Vagina (tissue), 2 donors: ENCODE measurements at regions of chr5 and their contacts with region 1.

Region 1: DNA sequence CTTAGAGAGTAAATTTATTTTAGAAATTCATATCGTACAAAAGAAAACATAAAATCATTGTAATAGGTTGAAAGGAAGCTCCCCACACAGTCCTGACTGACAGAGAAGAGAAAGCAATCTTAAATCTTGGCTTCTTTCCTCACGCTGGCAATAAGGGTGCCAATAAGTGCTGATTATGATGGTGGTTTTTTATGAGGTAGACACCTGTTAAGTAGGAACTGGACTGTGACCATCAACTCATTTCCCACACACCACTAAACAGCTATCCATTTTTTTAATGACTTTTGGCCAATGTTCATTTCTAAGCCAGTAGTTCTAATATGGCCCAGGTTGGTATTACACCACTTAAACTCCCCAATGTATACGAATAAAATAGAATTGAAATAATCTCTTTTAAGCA is 893.5 kb upstream of the NUDT12 start:
- DNase-seq: no peak
- H3K4me3 ChIP-seq: no peak overlapping the region
- H3K27ac ChIP-seq: no peak overlapping the region
- H3K4me1 ChIP-seq: no peaks in the 10 kb centered on the region
- H3K27me3 ChIP-seq: no peaks in the 10 kb centered on the region
- CTCF ChIP-seq: no peak
- POLR2A ChIP-seq: no peak

Region 2: DNA sequence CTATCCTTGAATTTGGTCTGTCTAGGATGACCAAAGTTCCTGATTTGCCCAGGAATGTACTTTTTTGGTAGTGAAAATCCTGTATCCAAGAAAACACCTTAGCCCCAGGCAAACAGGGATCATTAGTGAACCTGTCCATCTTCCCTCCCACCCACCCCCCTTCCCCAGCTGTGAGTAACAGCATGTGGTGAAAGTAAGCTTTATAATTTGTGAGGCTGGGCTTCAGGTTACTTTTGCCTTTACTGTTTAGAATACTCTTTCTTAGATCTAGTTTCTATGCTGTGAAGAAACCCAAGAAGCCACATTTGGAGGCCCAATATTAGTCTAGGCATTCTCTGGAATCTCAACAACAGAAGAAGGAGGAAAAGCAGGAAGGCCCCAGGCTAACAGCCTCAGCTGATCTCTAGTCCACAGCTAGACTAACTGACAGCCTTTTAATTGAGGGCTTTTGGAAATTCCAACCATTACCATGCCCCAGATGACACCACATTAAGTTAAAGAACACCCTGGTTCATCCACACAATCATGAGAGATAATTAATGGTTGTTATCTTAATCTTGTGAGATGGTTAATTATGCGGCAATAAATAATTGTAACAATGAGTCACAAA is 190.5 kb before region 1 on chr5:
- intact Hi-C with region 1: loop called (anchors 5 kb)
- DNase-seq: no peak
- H3K4me3 ChIP-seq: no peak overlapping the region
- H3K27ac ChIP-seq: no peak overlapping the region
- H3K4me1 ChIP-seq: no peaks in the 10 kb centered on the region
- H3K27me3 ChIP-seq: no peaks in the 10 kb centered on the region
- CTCF ChIP-seq: no peak
- POLR2A ChIP-seq: no peak